ENCODE measurements at regions of chr10 and their contacts with region 1.

Region 1: DNA sequence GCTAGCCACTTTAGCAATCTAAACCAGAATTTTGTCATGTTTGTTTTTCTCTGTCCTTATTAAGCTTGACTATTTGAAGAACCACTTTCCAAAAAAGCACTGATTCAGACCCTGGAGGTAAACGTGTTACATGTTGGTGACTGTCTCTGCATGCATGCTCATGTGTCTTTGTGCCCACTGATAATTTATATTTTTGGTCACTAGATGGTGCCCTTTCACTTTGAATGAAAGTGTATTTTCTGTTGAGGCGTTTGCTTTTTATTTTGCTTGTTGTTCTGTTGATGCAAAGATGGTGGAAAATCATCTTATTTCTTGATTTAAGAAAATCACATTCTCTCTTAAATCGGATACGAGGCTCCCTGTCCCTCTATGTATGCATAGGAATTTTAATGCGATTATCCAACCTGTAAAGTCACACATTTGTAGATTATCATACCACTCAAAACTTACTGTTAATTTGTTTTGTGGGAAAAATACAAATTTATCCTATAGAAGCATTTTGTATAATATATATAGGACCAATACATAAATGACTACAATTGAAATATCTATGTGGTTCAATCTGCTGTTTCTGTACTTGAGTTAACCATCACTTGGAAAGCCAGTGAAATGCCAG is 269.3 kb downstream of the BICC1 start:
- DNase-seq: peak; percentile 93
- ATAC-seq: peak; percentile 69
- H3K4me3 ChIP-seq: no peak overlapping the region
- H3K27ac ChIP-seq: no peak overlapping the region
- H3K4me1 ChIP-seq: peaks cover 20% of the 10 kb centered on the region
- H3K27me3 ChIP-seq: 0 out of 2 replicates have a peak, but pooled peaks cover 1% of the 10 kb centered on the region
- CTCF ChIP-seq: peak; percentile 97

Region 2: GRCh38 chr10:58531084-58531695 is 250.8 kb before region 1 on chr10:
- CTCF ChIA-PET with region 1: no interaction called
- POLR2A ChIA-PET with region 1: no interaction called
- intact Hi-C with region 1: loop called (anchors 2 kb)
- DNase-seq: peak; percentile 97
- ATAC-seq: peak; percentile 97
- H3K4me3 ChIP-seq: no peak overlapping the region
- H3K27ac ChIP-seq: no peak overlapping the region
- H3K4me1 ChIP-seq: no peaks in the 10 kb centered on the region
- H3K27me3 ChIP-seq: peaks cover 4% of the 10 kb centered on the region; the same call in 1 of the 2 replicates
- CTCF ChIP-seq: peak; percentile 93

Region 3: GRCh38 chr10:58952747-58953466 is 170.9 kb after region 1 on chr10:
- CTCF ChIA-PET with region 1: no interaction called
- POLR2A ChIA-PET with region 1: no interaction called
- intact Hi-C with region 1: loop called (anchors 1 kb)
- DNase-seq: peak; percentile 78
- ATAC-seq: peak; percentile 56
- H3K4me3 ChIP-seq: no peak overlapping the region
- H3K27ac ChIP-seq: no peak overlapping the region
- H3K4me1 ChIP-seq: peaks cover 25% of the 10 kb centered on the region
- H3K27me3 ChIP-seq: no peaks in the 10 kb centered on the region
- CTCF ChIP-seq: peak; percentile 91

Region 4: GRCh38 chr10:59234816-59235429 is 452.9 kb after region 1 on chr10:
- CTCF ChIA-PET with region 1: no interaction called
- POLR2A ChIA-PET with region 1: no interaction called
- intact Hi-C with region 1: loop called (anchors 2 kb)
- DNase-seq: peak; percentile 78
- ATAC-seq: peak; percentile 64
- H3K4me3 ChIP-seq: no peak overlapping the region
- H3K27ac ChIP-seq: no peak overlapping the region
- H3K4me1 ChIP-seq: peaks cover 11% of the 10 kb centered on the region
- H3K27me3 ChIP-seq: peaks cover 21% of the 10 kb centered on the region
- CTCF ChIP-seq: peak; percentile 97

Measured in PC-3 (cell line).